Activated T-helper 1 cell treated with anti-CD3 and anti-CD28 coated beads, Interleukin-12 subunit alpha, Interleukin-12 subunit beta, Interleukin-2, Interleukin-4 antibody, amounts not matched to agents 30 ng/mL and 10 ng/mL and 1 ng/mL, durations not matched to agents 14 hours and 24 hours and 36 hours (primary cell): ENCODE measurements at regions of chr20 and their contacts with region 1.

Region 1: DNA sequence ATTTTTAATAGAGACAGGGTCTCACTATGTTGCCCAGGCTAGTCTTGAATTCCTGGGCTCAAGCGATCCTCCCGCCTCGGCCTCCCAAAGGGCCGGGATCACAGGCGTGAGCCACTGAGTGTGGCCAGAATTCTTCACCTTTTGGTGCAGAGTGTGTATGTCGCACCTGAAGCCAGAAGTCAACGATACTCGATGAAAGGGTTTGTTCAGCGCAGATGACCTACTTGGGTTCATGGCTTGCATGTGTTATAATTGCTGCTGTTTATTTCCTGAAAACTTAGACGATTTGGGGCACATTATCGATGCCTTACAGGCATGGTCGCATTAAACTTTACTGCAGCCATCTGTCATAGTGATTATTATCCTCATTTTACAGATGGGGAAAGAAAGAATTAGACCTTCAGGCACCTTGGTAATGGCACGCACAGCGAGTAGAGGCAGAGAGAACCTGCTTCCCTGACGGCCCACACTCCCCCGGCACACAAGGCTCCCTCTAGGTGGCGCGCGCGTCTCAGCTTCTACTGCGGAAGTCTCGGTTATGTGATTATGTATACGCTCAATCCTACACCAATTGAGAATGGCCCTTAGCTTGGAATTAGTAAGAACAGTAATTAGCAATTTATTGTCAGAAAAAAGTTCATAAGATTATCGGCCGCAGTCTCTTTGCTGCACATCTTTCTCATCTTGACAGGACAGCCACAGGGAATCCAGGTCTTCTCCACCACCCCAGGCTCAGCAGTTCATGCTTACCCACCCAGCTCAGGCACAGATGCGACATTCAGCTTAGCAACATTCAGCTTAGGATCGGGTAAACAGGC is 212.8 kb upstream of the PROKR2 start:
- DNase-seq: peak; percentile 74
- H3K4me3 Mint-ChIP-seq: peak overlapping the region; percentile 35
- H3K27ac Mint-ChIP-seq: peak overlapping the region; percentile 47
- H3K4me1 Mint-ChIP-seq: peaks cover 26% of the 10 kb centered on the region
- H3K27me3 Mint-ChIP-seq: peaks cover 8% of the 10 kb centered on the region

Region 2: GRCh38 chr20:5557123-5557522 is 27.6 kb after region 1 on chr20:
- intact Hi-C with region 1: loop called (anchors 2 kb)
- DNase-seq: peak; percentile 36
- H3K4me3 Mint-ChIP-seq: no peak overlapping the region
- H3K27ac Mint-ChIP-seq: peak overlapping the region; percentile 7
- H3K4me1 Mint-ChIP-seq: peaks cover 15% of the 10 kb centered on the region
- H3K27me3 Mint-ChIP-seq: no peaks in the 10 kb centered on the region

Region 3: GRCh38 chr20:5933802-5934436 is 404.4 kb after region 1 on chr20:
- intact Hi-C with region 1: loop called (anchors 1 kb)
- DNase-seq: no peak
- H3K4me3 Mint-ChIP-seq: no peak overlapping the region
- H3K27ac Mint-ChIP-seq: no peak overlapping the region
- H3K4me1 Mint-ChIP-seq: peaks cover 7% of the 10 kb centered on the region
- H3K27me3 Mint-ChIP-seq: peaks cover 2% of the 10 kb centered on the region

Region 4: GRCh38 chr20:6008254-6008653 is 478.7 kb after region 1 on chr20:
- intact Hi-C with region 1: loop called (anchors 1 kb)
- DNase-seq: no peak
- H3K4me3 Mint-ChIP-seq: peak overlapping the region; percentile 16
- H3K27ac Mint-ChIP-seq: no peak overlapping the region
- H3K4me1 Mint-ChIP-seq: peaks cover 37% of the 10 kb centered on the region
- H3K27me3 Mint-ChIP-seq: no peaks in the 10 kb centered on the region

Region 5: GRCh38 chr20:7285918-7286556 is 1756.5 kb after region 1 on chr20:
- intact Hi-C with region 1: loop called (anchors 10 kb)
- DNase-seq: peak; percentile 4
- H3K4me3 Mint-ChIP-seq: no peak overlapping the region
- H3K27ac Mint-ChIP-seq: no peak overlapping the region
- H3K4me1 Mint-ChIP-seq: no peaks in the 10 kb centered on the region
- H3K27me3 Mint-ChIP-seq: no peaks in the 10 kb centered on the region